Breast epithelium (tissue), 4 donors: ENCODE measurements at regions of chr2 and their contacts with region 1.

Region 1: DNA sequence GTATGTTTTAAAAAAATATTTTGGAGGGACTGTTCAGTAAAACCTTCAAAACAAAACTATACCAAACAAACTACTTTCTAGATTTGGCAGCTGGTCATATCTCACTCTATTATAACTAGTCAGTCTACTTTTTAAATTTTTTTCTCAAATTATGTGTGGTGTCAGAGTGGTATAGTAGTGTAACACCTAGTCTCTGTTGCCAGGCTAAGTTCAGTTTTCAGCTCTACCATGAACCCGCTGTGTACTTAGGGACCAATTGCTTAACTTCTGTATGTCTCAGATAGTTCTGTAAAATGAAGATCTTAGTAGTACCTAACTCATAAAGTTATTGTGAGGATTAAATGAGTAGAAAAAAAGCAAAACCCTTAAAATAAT is 54.3 kb downstream of the GPD2 start:
- DNase-seq: no peak
- H3K4me3 ChIP-seq: no peak overlapping the region
- H3K27ac ChIP-seq: no peak overlapping the region
- H3K4me1 ChIP-seq: no peaks in the 10 kb centered on the region
- H3K27me3 ChIP-seq: no peaks in the 10 kb centered on the region
- CTCF ChIP-seq: no peak
- POLR2A ChIP-seq: no peak

Region 2: GRCh38 chr2:156215655-156216054 is 274.8 kb before region 1 on chr2:
- intact Hi-C with region 1: loop called (anchors 5 kb)
- DNase-seq: no peak
- H3K4me3 ChIP-seq: no peak overlapping the region
- H3K27ac ChIP-seq: no peak overlapping the region
- H3K4me1 ChIP-seq: no peaks in the 10 kb centered on the region
- H3K27me3 ChIP-seq: no peaks in the 10 kb centered on the region
- CTCF ChIP-seq: no peak
- POLR2A ChIP-seq: no peak

Region 3: DNA sequence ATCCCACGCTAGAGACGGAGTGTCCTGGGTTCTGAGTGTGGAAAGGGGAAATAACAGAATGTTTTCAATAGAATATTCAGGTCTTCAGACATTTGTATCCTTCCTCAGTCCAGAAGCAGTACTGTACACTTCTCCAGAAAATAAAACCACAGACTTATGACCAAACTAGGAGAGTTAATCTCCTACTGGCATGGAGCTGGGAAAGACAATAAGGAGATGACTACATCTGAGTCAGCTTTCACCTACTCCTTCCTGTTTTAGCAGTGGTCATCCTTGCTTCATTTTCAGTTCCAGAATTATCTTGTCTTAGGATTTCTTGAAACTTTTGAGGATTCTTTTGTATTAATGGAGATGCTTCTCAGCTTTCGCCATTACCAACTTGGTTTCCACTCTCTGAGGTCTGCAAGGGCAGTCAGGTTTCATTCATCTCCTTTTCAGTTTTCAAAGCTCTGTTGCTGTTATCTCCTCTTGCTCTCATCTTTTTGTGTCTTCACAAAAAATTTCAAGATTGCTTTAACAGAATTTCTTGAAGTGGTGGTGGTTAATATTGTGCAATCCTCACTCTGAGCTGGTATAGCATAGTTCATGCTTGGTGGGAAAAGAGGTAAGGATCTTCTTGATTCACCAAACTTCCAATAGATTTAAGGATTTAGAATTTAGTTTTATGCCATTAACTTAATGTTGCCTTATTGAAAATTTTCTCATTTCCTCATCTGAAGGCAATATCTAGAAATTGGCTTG is 134.3 kb before region 1 on chr2:
- intact Hi-C with region 1: no loop called
- DNase-seq: no peak
- H3K4me3 ChIP-seq: no peak overlapping the region
- H3K27ac ChIP-seq: no peak overlapping the region
- H3K4me1 ChIP-seq: no peaks in the 10 kb centered on the region
- H3K27me3 ChIP-seq: no peaks in the 10 kb centered on the region
- CTCF ChIP-seq: no peak
- POLR2A ChIP-seq: no peak